ENCODE measurements at regions of chr3 and their contacts with region 1.

Region 1: DNA sequence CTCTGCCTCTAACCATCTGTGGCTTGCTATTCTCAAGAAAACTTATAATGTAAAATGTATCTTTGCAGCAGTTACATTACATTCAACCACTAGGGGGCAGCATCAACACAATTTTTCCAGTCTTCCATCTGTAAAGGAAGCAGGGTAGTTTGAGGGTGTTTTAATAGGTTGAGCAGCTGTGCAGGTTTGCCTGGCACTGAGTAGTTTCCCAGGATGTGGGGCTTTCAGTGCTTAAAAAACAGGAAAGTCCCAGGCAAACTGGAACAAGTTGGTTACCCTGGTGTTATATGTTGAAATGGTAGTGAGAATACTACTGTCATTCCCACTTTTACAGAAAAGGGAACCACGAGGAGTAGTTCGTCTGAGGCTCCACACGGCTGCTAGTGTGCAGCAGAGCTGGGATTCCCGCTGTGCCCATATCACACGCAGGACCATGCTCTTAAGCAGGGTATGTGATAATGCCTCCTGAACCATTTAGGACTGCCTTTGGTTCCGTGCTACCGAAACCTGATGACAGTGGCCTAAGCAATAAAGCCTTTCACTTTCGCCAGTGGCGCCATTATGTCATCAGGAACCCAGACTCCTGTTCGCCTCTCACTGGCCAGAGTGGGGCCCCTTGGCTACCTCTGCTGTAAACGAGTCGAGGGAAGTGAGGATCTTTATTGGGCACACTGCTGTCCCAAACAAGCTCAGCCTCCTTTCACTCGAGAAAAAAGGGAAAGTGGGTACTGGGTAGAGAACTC is 64.7 kb upstream of the ZBTB38 start:
- DNase-seq: peak in 8 of 9 experiments; percentile 40 to 85 (median 64)
- ATAC-seq: peak; percentile 56
- H3K4me3 ChIP-seq: no peak overlapping the region
- H3K4me3 Mint-ChIP-seq: no peak overlapping the region
- H3K27ac ChIP-seq: no peak overlapping the region
- H3K27ac Mint-ChIP-seq: no peak overlapping the region
- H3K4me1 ChIP-seq: peaks cover 60% of the 10 kb centered on the region
- H3K4me1 Mint-ChIP-seq: peaks cover 66% of the 10 kb centered on the region
- H3K27me3 ChIP-seq: no peaks in the 10 kb centered on the region
- H3K27me3 Mint-ChIP-seq: no peaks in the 10 kb centered on the region
- CTCF ChIP-seq: peak; percentile 85

Region 2: DNA sequence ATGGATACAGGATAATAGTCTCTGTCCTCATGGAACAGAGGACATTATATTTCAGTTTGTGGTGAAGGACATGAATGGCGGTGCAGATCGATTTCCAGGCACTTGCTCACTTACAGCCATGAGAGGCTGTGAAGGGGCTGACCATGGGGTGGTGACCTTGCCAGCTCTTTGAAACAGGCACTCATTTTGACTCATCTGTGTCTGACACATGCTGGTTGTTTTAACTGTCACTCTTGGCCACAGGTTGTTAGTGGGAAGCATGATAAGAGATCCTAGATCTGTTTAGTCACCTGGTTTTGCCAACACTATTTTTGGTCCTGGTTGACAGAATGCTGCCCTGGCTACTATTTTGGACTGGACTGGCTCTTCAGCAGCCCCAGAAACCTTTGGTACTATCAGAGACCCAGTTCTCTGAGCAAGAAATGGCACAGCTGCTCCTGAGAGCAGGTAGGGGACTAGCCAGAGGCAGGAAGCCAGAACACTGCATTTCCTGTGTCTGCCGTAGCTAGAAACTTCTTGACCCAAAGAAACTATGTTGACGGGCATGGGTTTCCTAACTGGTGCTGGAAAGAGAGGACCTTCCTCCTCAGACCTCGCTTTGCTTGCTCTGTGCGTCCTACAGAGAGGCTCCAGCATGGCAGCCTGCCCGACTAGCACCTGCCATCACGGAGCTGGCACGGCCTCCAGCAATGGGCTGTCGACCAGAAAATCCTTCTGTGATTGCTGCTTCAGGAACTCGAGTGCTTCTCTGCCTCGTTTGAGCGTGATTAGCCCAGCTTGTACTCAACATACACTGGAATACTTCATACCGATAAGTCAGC is 65.7 kb before region 1 on chr3:
- CTCF ChIA-PET with region 1: interaction called, 21 read pairs
- POLR2A ChIA-PET with region 1: interaction called, 14 read pairs
- intact Hi-C with region 1: no loop called
- DNase-seq: peak in 3 of 9 experiments; percentile 19 to 55 (median 29)
- ATAC-seq: no peak
- H3K4me3 ChIP-seq: no peak overlapping the region
- H3K4me3 Mint-ChIP-seq: peak overlapping the region; percentile 69
- H3K27ac ChIP-seq: peak overlapping the region in 1 of 2 experiments; percentile 66
- H3K27ac Mint-ChIP-seq: peak overlapping the region; percentile 90
- H3K4me1 ChIP-seq: peaks cover 74% of the 10 kb centered on the region
- H3K4me1 Mint-ChIP-seq: peaks cover 90% of the 10 kb centered on the region
- H3K27me3 ChIP-seq: no peaks in the 10 kb centered on the region
- H3K27me3 Mint-ChIP-seq: no peaks in the 10 kb centered on the region
- CTCF ChIP-seq: no peak

Measured in CD8-positive, alpha-beta T cell (primary cell).